Psoas muscle (tissue), 8 donors: ENCODE measurements at regions of chr11 and their contacts with region 1.

Region 1: DNA sequence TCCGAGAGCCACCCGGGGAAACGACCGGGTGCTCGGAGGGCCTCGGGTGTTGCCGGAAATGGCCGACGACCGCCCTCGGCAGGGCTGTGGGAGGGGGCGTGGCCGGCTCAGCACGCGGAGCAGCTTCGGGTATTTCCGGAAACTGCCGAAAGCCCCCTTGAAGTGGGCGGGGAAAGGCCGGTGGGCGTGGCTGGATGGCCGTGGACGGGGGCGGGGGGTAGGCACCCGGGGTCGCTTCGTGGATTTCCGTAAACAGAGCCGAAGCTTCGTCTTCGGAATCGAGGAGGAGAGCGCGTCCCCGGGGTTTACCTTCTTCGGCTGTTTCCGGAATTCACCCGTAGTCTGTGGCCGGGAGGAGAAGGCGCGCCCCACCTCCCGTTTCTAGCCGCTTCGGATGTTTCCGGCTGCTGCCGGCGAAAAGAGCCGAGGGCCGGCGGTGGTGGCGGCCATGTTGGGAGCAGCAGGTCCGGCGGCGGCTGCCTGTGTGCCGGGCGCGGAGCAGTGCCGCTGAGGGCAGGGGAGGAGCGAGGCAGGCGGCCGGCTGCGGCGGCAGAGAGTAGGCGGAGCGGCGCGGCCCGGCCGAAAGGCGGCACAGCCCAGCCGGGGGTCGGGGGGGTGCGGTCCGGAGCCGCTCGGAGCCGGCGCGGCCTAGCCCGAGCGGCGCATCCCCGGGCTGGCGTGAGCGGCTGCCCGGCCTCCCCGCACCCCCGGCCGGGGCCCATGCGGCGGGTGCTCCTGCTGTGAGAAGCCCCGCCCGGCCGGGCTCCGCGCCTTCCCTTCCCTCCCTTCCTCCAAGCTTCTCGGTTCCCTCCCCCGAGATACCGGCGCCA is at the start of gene MARK2:
- DNase-seq: peak; percentile 98 to 99
- ATAC-seq: peak; percentile 91 to 94 (median 93)
- H3K4me3 ChIP-seq: peak within 1 kb of the TSS; percentile 89
- H3K27ac ChIP-seq: peak within 1 kb of the TSS; percentile 92
- H3K4me1 ChIP-seq: peaks cover 45% of the 10 kb centered on the region
- H3K27me3 ChIP-seq: no peaks in the 10 kb centered on the region
- CTCF ChIP-seq: no peak
- total RNA-seq, gene MARK2: 21.7 to 24.9 (median 22.9) TPM

Region 2: DNA sequence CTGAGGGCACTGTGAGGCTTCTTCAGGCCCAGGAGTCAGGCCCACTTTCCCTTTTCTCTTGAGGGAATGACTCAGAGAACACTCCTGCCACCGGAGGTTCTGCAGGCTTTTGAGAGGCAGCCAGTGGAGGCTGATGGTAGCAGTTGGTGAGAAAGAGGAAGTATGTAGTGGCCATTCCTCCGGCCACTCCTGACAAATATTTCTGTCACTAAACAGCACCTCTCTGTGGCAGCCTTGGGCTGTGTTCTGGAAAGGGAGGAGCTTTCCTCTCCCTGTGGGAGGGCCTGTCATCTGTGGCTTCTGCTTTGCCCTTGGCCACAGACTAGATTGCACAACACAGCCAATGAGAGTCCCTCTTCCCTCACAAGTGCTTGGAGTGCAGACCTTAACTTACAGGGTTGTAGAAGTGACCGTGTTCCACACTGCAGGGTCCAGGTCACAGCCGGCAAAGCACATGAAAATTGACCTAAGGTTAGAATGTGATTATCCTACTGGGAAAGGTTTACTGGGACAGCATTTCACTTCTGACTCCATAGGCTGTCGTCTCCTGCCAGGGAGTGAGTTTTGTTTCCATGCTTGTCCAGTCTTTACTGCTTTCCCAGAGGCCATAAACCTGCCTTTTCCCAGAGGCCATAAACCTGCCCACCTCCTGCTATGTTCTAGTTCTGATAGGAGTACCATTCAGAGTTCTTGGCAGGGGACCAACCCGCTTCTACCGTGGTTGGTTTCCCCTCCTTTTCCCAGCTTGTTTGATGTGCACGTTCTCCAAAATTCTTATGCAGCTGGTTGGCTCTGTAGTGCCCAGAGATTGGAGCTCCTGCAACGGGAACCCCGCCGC is 33.3 kb after region 1 on chr11:
- intact Hi-C with region 1: loop called (anchors 1 to 5 kb)
- DNase-seq: peak; percentile 78 to 87
- ATAC-seq: peak; percentile 95 to 98 (median 96)
- H3K4me3 ChIP-seq: peak overlapping the region; percentile 39
- H3K27ac ChIP-seq: peak overlapping the region; percentile 77
- H3K4me1 ChIP-seq: peaks cover 60% of the 10 kb centered on the region
- H3K27me3 ChIP-seq: no peaks in the 10 kb centered on the region
- CTCF ChIP-seq: peak; percentile 50

Region 3: GRCh38 chr11:63945477-63946163 is 106.7 kb after region 1 on chr11:
- intact Hi-C with region 1: loop called (anchors 1 to 2 kb)
- DNase-seq: peak; percentile 71 to 84
- ATAC-seq: peak; percentile 84 to 92 (median 88)
- H3K4me3 ChIP-seq: peak overlapping the region; percentile 37
- H3K27ac ChIP-seq: peak overlapping the region; percentile 85
- H3K4me1 ChIP-seq: peaks cover 22% of the 10 kb centered on the region
- H3K27me3 ChIP-seq: no peaks in the 10 kb centered on the region
- CTCF ChIP-seq: peak; percentile 77